HepG2 (cell line): ENCODE measurements at regions of chr6 and their contacts with region 1.

Region 1: DNA sequence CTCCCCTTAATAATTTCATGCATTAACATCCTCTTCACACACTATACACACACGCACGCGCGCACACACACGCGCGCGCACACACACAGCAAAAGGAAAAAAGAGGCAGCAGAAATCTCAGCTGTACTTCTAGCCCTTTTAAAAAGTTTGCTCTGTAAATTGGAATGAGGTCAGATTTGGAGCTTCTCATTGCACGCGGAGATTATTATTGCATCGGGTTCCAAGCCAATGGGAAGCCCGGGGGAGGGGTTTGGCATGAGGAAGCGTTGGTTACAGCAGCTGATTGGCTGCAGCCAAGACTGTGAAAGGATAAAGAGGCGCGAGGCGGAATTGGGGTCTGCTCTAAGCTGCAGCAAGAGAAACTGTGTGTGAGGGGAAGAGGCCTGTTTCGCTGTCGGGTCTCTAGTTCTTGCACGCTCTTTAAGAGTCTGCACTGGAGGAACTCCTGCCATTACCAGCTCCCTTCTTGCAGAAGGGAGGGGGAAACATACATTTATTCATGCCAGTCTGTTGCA is at the start of gene SOX4:
- DNase-seq: peak; percentile 92
- ATAC-seq: peak; percentile 74
- H3K4me3 ChIP-seq: peak within 1 kb of the TSS; percentile 56 to 86 (median 71)
- H3K27ac ChIP-seq: no peak within 1 kb of the TSS
- H3K4me1 ChIP-seq: peaks cover 38% of the 10 kb centered on the region
- H3K27me3 ChIP-seq: peaks cover 0 to 37% of the 10 kb centered on the region in 2 experiments; a peak in 3 of 5 replicates
- CTCF ChIP-seq: no peak
- EP300 ChIP-seq: no peak
- POLR2A ChIP-seq: peak; percentile 75 to 76
- RAD21 ChIP-seq: no peak
- total RNA-seq, gene SOX4: 3.4 and 3.5 TPM in 2 replicates

Region 2: DNA sequence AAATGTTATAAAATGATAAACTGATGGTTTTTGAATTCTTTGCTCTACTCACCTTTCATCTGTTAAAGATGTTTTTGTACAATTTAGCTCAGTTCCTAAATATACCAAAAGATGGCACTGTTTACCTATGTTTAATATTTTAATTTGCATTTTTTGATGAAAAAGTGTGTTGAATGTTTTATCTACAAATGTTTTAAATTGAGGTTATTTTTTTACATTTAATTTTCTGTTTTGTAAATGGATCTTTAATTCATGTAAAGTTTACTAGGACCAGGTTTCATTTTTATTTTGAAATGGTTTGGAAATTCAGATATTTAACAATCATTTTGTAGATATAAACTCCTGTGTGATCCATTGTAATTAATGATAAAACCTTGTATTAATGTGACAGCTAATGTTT is 1029.2 kb before region 1 on chr6:
- CTCF ChIA-PET with region 1: interaction called, 13 read pairs
- POLR2A ChIA-PET with region 1: interaction called, 11 read pairs
- in situ Hi-C with region 1: loop called (anchors 5 kb)
- intact Hi-C with region 1: loop called (anchors 1 kb)
- DNase-seq: no peak
- ATAC-seq: no peak
- H3K4me3 ChIP-seq: no peak overlapping the region
- H3K27ac ChIP-seq: no peak overlapping the region
- H3K4me1 ChIP-seq: peaks cover 3% of the 10 kb centered on the region
- H3K27me3 ChIP-seq: no peaks in the 10 kb centered on the region
- CTCF ChIP-seq: peak; percentile 35
- EP300 ChIP-seq: no peak
- POLR2A ChIP-seq: no peak
- RAD21 ChIP-seq: no peak

Region 3: DNA sequence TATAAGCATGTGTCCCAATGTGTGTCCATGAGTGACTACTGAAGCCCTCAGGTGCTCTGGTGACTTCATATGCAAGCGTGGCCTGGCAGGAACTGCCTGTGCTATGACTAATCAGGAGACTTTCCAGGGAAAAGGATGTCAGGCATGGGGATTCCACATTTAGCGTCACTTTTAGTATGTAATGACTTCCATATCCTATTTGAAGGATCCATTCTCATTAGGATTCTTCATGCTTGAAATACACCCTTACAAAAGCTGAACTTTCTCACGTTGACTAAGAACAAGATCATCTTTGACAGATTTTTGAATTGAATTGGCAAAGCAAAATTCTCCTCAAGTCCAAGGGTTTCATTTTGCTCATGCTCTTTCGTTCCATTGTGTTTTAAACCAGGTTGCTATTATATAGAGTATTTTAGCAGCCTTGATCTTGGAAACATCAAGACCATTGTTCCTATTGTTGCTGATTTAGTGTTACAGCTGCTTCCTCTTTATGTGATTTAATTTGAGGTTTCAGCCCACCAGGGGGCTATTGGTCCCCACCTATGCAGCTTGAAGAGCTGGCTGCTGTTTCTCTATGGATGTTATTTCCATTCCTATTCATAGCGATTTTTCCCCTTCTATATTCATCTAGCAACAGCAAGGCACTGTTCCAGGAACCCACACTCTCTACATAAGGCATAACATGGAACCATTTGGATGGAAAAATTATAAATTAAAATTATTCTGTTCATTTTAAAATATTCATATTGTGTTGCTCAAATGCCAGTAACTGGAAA is 640.6 kb before region 1 on chr6:
- CTCF ChIA-PET with region 1: no interaction called
- POLR2A ChIA-PET with region 1: no interaction called
- in situ Hi-C with region 1: no loop called
- intact Hi-C with region 1: loop called (anchors 5 kb)
- DNase-seq: peak; percentile 29
- ATAC-seq: no peak; the same call in 2 of the 3 replicates
- H3K4me3 ChIP-seq: no peak overlapping the region
- H3K27ac ChIP-seq: no peak overlapping the region
- H3K4me1 ChIP-seq: no peaks in the 10 kb centered on the region
- H3K27me3 ChIP-seq: no peaks in the 10 kb centered on the region
- CTCF ChIP-seq: no peak
- EP300 ChIP-seq: no peak
- POLR2A ChIP-seq: no peak
- RAD21 ChIP-seq: no peak

Region 4: DNA sequence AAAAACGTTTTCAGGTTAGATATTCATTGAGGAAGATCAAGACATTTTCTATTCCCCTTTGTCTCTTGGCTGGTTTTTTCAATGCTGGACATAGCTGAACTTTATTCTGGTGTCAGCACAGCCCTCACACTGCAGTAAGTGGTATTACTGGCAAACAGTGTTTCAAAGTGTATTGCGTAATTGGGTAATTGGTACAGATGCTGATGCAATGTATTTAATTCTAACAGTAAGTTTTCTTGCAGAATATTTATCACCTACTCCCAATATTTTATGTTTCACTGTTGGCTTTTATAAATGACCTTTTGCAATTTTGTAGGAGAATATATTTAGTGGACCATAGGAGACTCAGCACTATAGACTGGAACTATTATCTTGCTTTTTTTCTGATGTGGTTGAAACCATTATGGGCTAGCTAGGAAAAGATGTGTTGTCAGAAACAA is 287.6 kb before region 1 on chr6:
- CTCF ChIA-PET with region 1: no interaction called
- POLR2A ChIA-PET with region 1: interaction called, 3 read pairs
- in situ Hi-C with region 1: no loop called
- intact Hi-C with region 1: loop called (anchors 5 kb)
- DNase-seq: peak; percentile 70
- ATAC-seq: peak; percentile 89
- H3K4me3 ChIP-seq: no peak overlapping the region
- H3K27ac ChIP-seq: no peak overlapping the region
- H3K4me1 ChIP-seq: peaks cover 31% of the 10 kb centered on the region
- H3K27me3 ChIP-seq: peaks cover 1 to 12% of the 10 kb centered on the region in 2 experiments; a peak in 4 of 5 replicates
- CTCF ChIP-seq: peak; percentile 43
- EP300 ChIP-seq: peak; percentile 62 to 87; a peak in 3 of 4 replicates
- POLR2A ChIP-seq: no peak
- RAD21 ChIP-seq: no peak; the same call in 1 of the 2 replicates

Region 5: DNA sequence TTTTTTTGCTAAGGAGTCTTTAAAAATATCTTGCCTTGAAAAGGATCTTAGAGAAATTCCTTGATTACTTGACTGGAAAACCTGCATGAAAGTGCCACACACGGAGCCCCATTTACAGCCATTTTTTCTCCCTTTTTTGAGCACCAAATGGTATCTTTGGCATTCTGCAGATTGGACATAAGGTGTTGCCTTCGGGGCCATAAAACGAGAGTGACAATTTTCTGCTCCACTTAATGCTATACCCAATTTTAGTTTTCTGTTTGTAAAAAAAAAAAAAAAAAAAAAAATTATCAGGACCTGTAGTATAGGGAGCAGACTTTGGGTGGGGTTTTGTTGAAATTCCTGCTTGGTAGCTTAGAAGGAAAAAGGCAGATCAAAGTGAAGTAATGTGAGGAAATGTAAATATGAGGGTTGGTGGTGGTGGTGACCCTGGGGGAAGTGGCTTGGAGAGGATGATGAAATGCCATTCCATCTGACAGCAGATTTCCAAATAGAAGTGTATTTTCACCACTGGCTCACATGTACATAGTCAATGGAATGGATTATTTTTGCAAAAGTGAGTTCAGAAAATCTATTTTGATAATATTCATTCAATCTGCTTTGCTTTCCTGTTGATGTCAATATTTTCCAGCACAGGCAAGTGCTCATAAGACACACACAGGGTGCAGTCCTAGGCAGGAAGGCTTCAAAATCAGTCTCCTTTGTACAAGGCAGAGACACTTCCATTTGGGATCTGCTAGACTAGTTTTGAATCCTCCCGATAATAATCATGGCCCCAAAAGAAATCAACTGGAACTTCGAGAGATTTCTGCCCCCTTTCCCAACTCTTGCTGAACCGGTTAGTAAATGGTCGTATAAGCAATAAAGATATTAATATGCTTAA is 211.9 kb before region 1 on chr6:
- CTCF ChIA-PET with region 1: no interaction called
- POLR2A ChIA-PET with region 1: interaction called, 3 read pairs
- in situ Hi-C with region 1: no loop called
- intact Hi-C with region 1: loop called (anchors 1 kb)
- DNase-seq: peak; percentile 94
- ATAC-seq: peak; percentile 91
- H3K4me3 ChIP-seq: no peak overlapping the region
- H3K27ac ChIP-seq: peak overlapping the region; percentile 53
- H3K4me1 ChIP-seq: peaks cover 61% of the 10 kb centered on the region
- H3K27me3 ChIP-seq: 0 out of 5 replicates have a peak, but pooled peaks cover 0 to 3% of the 10 kb centered on the region in 2 experiments
- CTCF ChIP-seq: 0 out of 2 replicates have a peak, but pooled peaks have one; percentile 8
- EP300 ChIP-seq: peak; percentile 57 to 97; a peak in 3 of 4 replicates
- POLR2A ChIP-seq: no peak
- RAD21 ChIP-seq: no peak

Region 6: DNA sequence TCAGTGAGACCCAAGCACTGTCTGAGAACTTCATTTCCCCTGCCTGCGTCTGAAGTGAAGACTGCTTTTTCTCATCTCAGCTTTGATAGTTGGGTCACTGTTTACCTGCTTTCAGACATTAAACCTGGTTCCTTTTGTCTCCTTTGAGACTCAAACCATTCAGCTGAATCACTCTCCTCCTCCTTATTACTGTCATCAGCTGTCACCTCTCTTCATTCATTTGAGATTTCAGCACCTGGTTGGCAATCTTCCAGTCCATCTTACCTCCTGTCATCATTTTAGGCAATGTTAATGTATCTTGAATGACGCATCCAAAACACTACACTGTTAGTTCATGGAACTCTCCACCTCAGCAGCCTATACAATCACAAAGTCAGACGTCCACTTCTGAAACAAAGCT is 34.2 kb before region 1 on chr6:
- CTCF ChIA-PET with region 1: no interaction called
- POLR2A ChIA-PET with region 1: no interaction called
- in situ Hi-C with region 1: no loop called
- intact Hi-C with region 1: no loop called
- DNase-seq: no peak
- ATAC-seq: no peak
- H3K4me3 ChIP-seq: no peak overlapping the region
- H3K27ac ChIP-seq: no peak overlapping the region
- H3K4me1 ChIP-seq: no peaks in the 10 kb centered on the region
- H3K27me3 ChIP-seq: 0 out of 5 replicates have a peak, but pooled peaks cover 0 to 3% of the 10 kb centered on the region in 2 experiments
- CTCF ChIP-seq: no peak
- EP300 ChIP-seq: no peak
- POLR2A ChIP-seq: no peak
- RAD21 ChIP-seq: no peak

Region 7: GRCh38 chr6:21935561-21936028 is 342.1 kb after region 1 on chr6:
- CTCF ChIA-PET with region 1: no interaction called
- POLR2A ChIA-PET with region 1: no interaction called
- in situ Hi-C with region 1: no loop called
- intact Hi-C with region 1: loop called (anchors 2 kb)
- DNase-seq: peak; percentile 36
- ATAC-seq: peak; percentile 87
- H3K4me3 ChIP-seq: no peak overlapping the region
- H3K27ac ChIP-seq: no peak overlapping the region
- H3K4me1 ChIP-seq: no peaks in the 10 kb centered on the region
- H3K27me3 ChIP-seq: no peaks in the 10 kb centered on the region
- CTCF ChIP-seq: peak; percentile 58
- EP300 ChIP-seq: no peak
- POLR2A ChIP-seq: no peak
- RAD21 ChIP-seq: no peak